Left ventricle myocardium inferior (tissue), 1 donor: ENCODE measurements at regions of chr9 and their contacts with region 1.

Region 1: DNA sequence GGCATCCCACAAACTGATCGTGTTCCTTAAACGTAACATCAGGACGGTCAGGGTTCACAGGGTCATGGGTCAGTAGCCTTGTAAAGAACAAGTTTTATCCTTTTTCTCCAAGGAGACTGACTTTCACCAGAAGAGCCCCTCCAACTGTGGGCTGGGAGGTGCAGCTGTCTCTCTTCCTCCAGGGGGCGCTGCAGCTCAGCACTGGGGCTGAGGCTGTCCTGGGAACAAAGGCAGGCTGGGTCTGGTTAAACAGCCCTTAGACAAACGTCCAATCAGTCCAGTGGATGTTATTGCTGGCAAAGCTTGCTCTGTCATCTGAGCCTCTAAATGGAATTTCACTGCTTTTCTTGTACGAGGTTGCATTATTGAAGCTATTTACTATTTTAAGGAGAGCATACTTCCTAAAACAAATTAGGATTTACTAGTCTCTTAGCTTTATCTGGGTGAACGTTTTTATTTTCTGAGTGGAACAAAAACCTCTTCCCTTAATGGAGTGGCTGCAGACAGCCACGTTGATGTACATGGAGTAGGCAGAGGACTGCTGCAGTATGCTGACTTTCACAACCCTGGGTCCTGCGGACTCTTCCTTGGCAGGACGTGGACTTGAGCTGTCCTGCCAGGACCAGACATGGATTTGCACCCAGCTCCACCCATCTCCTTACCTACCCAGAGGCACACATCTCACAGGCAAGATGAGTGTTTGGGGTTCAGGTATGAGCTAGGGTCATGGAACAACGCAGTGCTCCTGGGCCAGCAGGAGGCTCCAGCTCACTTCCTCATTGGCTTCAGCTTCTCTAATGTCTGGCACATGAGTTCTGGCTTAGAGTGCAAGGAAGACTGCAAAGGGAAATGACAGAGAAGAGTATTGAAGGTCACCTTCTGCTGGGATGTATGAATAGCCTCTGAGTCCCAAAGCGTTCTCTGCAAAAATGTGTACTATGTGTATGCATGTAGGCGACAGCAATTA is 7.8 kb downstream of the EXOSC2 start:
- DNase-seq: peak; percentile 76
- H3K4me3 ChIP-seq: no peak overlapping the region
- H3K27ac ChIP-seq: peak overlapping the region; percentile 21
- H3K4me1 ChIP-seq: peaks cover 17% of the 10 kb centered on the region
- H3K27me3 ChIP-seq: no peaks in the 10 kb centered on the region
- CTCF ChIP-seq: peak; percentile 97

Region 2: GRCh38 chr9:130498298-130498917 is 202.9 kb before region 1 on chr9:
- intact Hi-C with region 1: no loop called
- DNase-seq: no peak
- H3K4me3 ChIP-seq: no peak overlapping the region
- H3K27ac ChIP-seq: no peak overlapping the region
- H3K4me1 ChIP-seq: no peaks in the 10 kb centered on the region
- H3K27me3 ChIP-seq: no peaks in the 10 kb centered on the region
- CTCF ChIP-seq: no peak

Region 3: DNA sequence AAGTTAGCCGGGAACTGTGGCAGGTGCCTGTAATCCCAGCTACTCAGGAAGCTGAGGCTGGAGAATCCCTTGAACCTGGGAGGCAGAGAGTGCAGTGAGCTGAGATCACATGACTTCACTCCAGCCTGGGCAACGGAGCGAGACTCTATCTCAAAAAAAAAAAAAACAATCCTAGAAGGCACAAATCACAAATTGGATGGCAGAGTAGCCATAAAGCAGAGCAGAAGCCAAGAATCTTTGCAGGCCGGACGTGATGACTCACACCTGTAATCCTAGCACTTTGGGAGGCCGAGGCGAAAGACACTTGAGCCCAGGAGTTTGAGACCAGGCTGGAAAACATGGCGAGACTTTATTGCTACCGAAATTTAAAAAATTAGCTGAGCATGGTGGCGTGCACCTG is 131.1 kb before region 1 on chr9:
- intact Hi-C with region 1: no loop called
- DNase-seq: no peak
- H3K4me3 ChIP-seq: no peak overlapping the region
- H3K27ac ChIP-seq: no peak overlapping the region
- H3K4me1 ChIP-seq: peaks cover 5% of the 10 kb centered on the region
- H3K27me3 ChIP-seq: no peaks in the 10 kb centered on the region
- CTCF ChIP-seq: no peak

Region 4: DNA sequence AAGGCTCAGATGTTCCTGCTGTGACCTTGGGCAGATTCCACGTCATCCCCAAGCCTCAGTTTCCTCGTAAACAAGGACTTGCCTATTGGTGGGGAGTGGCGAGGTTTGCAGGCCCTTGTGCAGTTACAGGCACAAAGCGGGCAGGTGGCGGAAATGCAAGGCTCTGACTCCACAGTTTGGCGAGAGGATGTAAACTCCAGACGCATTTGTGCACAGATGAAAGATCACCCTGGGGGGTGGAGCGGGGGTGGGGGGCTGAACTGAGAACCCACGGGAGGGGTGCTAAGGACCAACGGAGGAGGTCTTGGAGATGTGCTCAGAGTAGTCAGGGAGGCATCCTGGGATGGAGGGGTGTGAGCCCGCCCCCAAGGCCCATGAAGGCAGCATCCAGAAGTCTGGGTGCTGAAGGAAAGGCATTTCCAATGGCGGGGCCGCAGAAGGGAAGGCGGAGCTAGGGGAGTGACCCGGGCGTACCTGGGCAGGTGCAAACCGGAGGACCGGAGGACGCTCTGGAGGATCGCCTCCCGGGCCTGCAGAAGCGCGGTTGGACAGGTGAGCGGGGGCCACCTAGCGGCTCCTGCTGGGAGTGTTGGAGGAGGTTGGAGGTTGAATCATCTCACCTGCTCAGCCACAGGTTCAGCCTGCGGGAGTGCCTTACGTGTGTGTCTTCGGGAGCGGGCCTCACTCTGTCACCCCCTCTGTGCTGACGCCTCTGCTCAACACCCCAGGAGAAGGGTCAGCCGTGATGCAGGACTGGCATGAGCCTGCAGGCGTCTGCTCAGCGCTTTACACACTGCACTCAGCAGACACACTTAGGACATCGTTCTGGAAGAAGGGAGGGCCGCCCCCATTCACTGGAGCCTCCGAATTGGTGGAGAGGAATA is 239.6 kb after region 1 on chr9:
- intact Hi-C with region 1: loop called (anchors 10 kb)
- DNase-seq: peak; percentile 62
- H3K4me3 ChIP-seq: no peak overlapping the region
- H3K27ac ChIP-seq: no peak overlapping the region
- H3K4me1 ChIP-seq: peaks cover 32% of the 10 kb centered on the region
- H3K27me3 ChIP-seq: peaks cover 77% of the 10 kb centered on the region
- CTCF ChIP-seq: peak; percentile 88

Region 5: DNA sequence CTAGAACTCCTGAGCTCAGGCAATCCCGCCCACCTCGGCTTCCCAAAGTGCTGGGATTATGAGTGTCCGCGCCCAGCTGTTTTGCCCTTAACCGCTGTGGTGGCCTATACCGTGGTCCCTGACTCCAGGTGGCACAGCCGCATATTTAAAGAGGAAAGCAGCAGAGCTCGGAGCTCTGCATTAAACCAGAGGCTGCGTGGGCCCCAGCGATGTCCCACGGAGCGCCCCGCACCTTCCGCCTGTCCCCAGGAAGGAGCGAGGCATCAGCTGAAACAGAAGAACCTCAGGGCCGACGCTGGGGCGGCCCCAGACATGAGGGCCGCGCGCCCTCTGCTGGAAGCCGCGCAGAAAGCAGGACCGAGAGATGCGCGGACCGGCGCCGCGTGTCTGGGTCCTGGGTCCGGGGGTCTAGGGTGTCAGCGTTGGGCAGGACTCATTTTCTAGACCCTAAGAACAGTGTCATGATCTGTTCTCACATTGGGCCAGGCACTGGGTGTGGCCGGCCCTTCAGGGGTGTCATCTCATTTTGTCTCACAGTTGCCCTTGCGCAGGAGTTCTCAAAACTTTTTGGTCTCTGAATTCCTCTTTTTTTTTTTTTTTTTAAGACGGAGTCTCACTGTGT is 345.4 kb after region 1 on chr9:
- intact Hi-C with region 1: loop called (anchors 10 kb)
- DNase-seq: peak; percentile 56
- H3K4me3 ChIP-seq: no peak overlapping the region
- H3K27ac ChIP-seq: no peak overlapping the region
- H3K4me1 ChIP-seq: no peaks in the 10 kb centered on the region
- H3K27me3 ChIP-seq: peaks cover 5% of the 10 kb centered on the region
- CTCF ChIP-seq: peak; percentile 95